ENCODE measurements at regions of chr1 and their contacts with region 1.

Region 1: DNA sequence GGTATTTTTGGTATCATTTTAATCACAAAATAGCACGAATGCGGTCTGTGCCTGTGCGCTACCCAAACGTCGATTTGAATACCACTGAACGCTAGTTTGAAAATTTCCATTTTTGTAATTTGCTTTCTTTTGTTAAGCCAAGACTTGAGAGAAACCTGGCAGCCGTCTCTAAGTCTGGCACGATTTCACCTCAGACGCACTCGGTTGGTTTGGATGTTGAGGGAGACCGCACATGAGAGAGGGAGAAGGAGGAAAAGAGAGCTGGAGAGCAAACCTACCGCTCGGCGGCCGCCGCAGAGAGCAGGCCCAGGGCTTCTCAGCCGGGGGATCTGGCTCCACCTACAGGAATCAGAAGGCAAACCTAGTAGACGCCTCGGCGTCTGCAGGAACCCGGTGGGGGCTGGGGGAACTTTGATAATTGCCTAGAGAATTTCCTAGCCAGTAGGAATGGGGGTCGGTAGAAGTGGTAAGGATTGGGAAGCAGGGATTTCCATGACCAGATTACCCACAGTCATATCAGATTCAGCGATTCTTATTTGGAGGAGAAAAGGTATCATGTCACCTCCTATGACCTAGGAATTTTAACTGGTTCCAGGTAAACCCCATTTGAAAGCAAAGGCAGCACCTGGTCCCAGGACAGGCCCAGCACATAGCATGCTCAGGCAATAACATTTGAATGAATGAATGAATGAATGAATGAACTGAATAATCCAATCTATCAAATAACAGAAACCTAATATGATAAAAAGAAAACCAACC is 83.2 kb downstream of the TM2D1 start:
- DNase-seq: peak; percentile 57 to 71
- ATAC-seq: peak; percentile 60 to 79
- H3K4me3 ChIP-seq: peak overlapping the region; percentile 18 to 36 (median 24)
- H3K27ac ChIP-seq: peak overlapping the region; percentile 32 to 59 (median 51)
- H3K4me1 ChIP-seq: peaks cover 0 to 22% of the 10 kb centered on the region in 2 donors
- H3K27me3 ChIP-seq: no peaks in the 10 kb centered on the region
- CTCF ChIP-seq: peak; percentile 24 to 78 (median 53)
- POLR2A ChIP-seq: no peak

Region 2: GRCh38 chr1:61469365-61469764 is 172.4 kb before region 1 on chr1:
- in situ Hi-C with region 1: no loop called
- intact Hi-C with region 1: no loop called
- DNase-seq: no peak
- ATAC-seq: no peak
- H3K4me3 ChIP-seq: no peak overlapping the region
- H3K27ac ChIP-seq: no peak overlapping the region
- H3K4me1 ChIP-seq: no peaks in the 10 kb centered on the region
- H3K27me3 ChIP-seq: no peaks in the 10 kb centered on the region
- CTCF ChIP-seq: no peak
- POLR2A ChIP-seq: no peak

Region 3: DNA sequence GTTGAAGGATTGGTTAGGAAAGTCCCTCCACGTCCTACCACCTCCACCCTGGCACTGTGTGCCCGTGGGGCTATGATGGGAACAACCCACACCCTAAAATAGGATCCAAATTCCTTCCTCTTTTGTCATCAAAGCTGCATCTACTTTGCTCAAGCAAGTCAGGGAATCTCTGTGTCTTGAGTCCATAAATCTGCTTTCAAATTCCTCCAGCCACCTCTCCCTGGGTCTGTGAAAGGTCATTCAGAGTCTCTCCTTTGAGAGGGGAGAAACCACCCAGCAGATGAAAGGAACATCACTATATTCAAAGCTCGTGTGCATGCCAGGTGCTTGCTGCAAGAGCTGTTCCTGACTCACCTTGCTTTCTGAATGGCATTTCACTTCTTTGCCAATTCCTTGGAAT is 160.4 kb before region 1 on chr1:
- in situ Hi-C with region 1: no loop called
- intact Hi-C with region 1: no loop called
- DNase-seq: no peak
- ATAC-seq: no peak
- H3K4me3 ChIP-seq: no peak overlapping the region
- H3K27ac ChIP-seq: no peak overlapping the region
- H3K4me1 ChIP-seq: no peaks in the 10 kb centered on the region
- H3K27me3 ChIP-seq: no peaks in the 10 kb centered on the region
- CTCF ChIP-seq: no peak
- POLR2A ChIP-seq: no peak

Region 4: GRCh38 chr1:61606448-61607312 is 35.1 kb before region 1 on chr1:
- in situ Hi-C with region 1: no loop called
- intact Hi-C with region 1: loop called (anchors 2 kb)
- DNase-seq: peak; percentile 64 to 81
- ATAC-seq: peak; percentile 72 to 88
- H3K4me3 ChIP-seq: peak overlapping the region in 2 of 4 donors; percentile 1 to 28
- H3K27ac ChIP-seq: peak overlapping the region; percentile 56 to 66 (median 58)
- H3K4me1 ChIP-seq: peaks cover 0 to 4% of the 10 kb centered on the region in 2 donors
- H3K27me3 ChIP-seq: no peaks in the 10 kb centered on the region
- CTCF ChIP-seq: no peak
- POLR2A ChIP-seq: no peak